Gastrocnemius medialis (tissue), 4 donors: ENCODE measurements at regions of chr16 and their contacts with region 1.

Region 1: GRCh38 chr16:67191995-67192681 is at the start of gene E2F4:
- DNase-seq: peak; percentile 86 to 87
- ATAC-seq: peak; percentile 92 to 93
- H3K4me3 ChIP-seq: peak within 1 kb of the TSS; percentile 92 to 99 (median 94)
- H3K27ac ChIP-seq: peak within 1 kb of the TSS; percentile 81 to 90 (median 86)
- H3K4me1 ChIP-seq: peaks cover 22 to 30% of the 10 kb centered on the region in 2 donors
- H3K27me3 ChIP-seq: no peaks in the 10 kb centered on the region
- CTCF ChIP-seq: peak in 1 of 5 experiments; percentile 18
- POLR2A ChIP-seq: peak; percentile 81 to 88
- total RNA-seq, gene E2F4: 67.8 to 114 (median 96.5) TPM

Region 2: GRCh38 chr16:67053767-67054334 is 138.3 kb before region 1 on chr16:
- in situ Hi-C with region 1: no loop called
- intact Hi-C with region 1: no loop called
- DNase-seq: no peak
- ATAC-seq: no peak
- H3K4me3 ChIP-seq: no peak overlapping the region
- H3K27ac ChIP-seq: peak overlapping the region; percentile 20 to 87 (median 82)
- H3K4me1 ChIP-seq: peaks cover 6 to 23% of the 10 kb centered on the region in 2 donors
- H3K27me3 ChIP-seq: no peaks in the 10 kb centered on the region
- CTCF ChIP-seq: no peak
- POLR2A ChIP-seq: no peak

Region 3: GRCh38 chr16:67226804-67227557 is 34.8 kb after region 1 on chr16 and contains the start of gene TMEM208:
- in situ Hi-C with region 1: no loop called
- intact Hi-C with region 1: loop called (anchors 1 kb)
- DNase-seq: peak; percentile 95 to 97
- ATAC-seq: peak; percentile 89 to 93
- H3K4me3 ChIP-seq: peak within 1 kb of the TSS; percentile 86 to 99 (median 96)
- H3K27ac ChIP-seq: peak within 1 kb of the TSS; percentile 83 to 94 (median 85)
- H3K4me1 ChIP-seq: peaks cover 19 to 22% of the 10 kb centered on the region in 2 donors
- H3K27me3 ChIP-seq: no peaks in the 10 kb centered on the region
- CTCF ChIP-seq: peak in 1 of 5 experiments; percentile 33
- POLR2A ChIP-seq: peak; percentile 73 to 87
- total RNA-seq, gene TMEM208: 14.7 to 35.8 (median 29.2) TPM